ENCODE measurements at regions of chr11 and their contacts with region 1.

Region 1: DNA sequence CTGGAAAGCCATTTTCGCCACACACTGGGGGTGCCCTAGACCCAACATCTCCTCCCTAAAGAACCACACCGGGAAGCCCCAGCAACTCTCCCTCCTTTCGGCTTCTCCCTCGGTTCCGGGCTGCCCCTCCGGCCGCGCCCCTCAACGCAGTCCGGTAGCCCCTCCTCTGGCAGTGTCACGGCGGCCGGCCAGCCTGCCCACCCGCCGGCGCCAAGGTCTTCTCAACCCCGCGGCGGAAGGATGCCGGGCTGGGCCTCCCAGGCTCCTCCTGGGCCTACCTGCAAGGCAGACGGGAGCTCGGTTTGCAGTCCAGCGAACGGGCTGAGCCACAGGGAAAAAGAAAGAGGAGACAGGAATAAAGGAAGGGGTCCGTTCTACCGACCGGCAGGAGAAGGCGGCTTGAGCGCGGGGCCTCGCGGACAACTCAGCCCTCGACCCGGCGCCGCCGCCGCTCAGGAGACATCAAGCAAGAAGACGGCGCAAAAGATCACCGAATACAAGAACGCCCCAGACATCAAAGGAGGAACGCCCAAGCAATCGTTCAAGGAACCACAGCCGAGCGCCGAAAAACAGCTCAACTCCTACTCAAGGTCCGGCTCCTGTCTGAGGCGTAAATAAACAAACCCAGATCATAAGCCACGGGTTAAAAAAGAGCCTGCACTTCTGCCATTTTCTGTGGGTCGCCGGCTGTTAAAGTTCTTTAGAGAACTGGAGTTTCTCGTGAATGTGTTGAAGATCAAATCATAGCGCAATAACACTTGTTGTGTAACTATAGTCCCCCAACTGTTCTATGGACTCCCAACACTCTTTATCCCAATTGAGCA is at the start of gene AMBRA1:
- DNase-seq: peak; percentile 85
- ATAC-seq: peak; percentile 91 to 94
- total RNA-seq, gene AMBRA1: 14.9 to 20.1 TPM

Region 2: DNA sequence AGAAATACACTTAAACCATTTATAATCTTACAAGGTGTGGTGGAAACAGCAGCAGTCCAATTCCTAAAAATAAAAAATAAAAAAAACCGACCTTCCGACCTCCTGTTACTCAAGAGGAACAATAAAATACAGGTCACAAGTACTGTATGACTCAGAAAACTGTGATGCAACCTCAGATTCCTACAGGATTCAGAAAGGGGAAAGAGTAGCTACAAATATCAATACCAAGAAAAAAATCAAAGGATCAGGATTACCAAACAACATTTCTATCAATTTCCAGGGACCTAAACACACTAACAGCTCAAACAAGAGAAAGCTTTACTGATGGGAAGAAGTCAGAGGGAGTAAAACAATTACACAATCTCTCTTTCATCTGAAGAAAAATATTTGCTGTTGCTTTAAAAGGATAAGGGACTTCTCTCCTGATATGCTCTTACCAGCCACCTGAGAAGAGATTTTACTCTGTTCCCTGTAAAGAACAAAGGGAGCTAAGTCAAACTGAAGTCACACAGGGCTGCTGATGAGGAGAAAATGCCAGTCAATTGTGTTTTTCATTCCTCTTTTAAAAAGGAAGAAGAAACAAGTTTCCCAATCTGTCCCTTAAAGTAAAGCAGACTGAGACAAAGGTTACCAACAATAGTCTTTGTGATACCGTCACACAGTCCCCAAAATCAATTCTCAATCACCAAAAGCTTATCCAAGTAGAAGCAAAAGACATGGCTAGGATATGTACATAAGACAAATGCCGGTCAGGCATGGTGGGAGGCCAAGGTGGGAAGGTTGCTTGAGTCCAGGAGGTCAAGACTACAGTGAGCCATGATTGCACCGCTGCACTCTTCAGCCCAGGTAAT is 39.3 kb before region 1 on chr11:
- intact Hi-C with region 1: loop called in 1 of 2 experiments (anchors 5 kb)
- DNase-seq: no peak
- ATAC-seq: peak; percentile 38 to 83